ENCODE measurements at regions of chr10 and their contacts with region 1.

Region 1: DNA sequence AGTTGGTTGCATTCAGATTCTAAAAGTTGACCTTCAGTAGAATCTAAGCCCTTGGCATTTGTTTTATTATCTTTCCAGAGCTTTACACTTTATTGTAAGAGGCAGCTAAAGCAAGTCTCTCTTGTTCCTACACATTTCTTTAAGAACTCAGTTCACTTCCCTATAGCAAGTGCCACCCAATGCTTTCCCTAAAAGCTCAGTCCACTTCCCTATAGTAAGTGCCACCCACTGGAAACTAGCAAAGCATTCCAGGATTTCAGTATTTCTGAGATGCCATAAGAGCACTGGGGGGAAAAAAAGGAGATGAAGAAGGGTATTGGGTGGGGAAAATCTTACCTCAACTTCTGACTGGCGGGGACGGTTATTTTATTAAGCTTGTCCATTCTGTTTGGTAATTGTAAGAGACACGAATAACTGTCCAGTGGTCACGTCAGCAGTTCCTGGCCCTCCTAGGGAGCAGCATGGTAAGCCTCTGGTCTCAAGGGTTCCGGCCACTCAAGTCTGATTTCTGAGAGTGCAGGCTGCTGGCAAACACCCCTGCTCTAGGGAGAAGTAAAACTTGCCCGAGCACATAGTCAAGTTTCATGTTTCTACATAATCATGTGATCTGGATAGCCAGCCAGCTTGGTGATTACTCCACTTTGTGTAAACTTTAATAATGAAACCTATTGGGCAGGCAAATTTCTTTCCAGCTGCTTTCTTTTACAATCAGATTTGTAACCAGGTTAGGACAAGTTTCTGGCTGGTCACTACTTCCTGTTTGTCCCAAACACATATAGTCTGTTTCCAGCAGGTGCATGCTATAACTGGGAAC is at the start of gene BLNK:
- DNase-seq: peak; percentile 86
- H3K4me3 ChIP-seq: peak within 1 kb of the TSS; percentile 52 to 76 (median 54)
- H3K27ac ChIP-seq: peak within 1 kb of the TSS; percentile 47
- H3K4me1 ChIP-seq: peaks cover 51% of the 10 kb centered on the region
- H3K27me3 ChIP-seq: no peaks in the 10 kb centered on the region
- CTCF ChIP-seq: no peak
- total RNA-seq, gene BLNK: 5.8 to 9.8 TPM

Region 2: DNA sequence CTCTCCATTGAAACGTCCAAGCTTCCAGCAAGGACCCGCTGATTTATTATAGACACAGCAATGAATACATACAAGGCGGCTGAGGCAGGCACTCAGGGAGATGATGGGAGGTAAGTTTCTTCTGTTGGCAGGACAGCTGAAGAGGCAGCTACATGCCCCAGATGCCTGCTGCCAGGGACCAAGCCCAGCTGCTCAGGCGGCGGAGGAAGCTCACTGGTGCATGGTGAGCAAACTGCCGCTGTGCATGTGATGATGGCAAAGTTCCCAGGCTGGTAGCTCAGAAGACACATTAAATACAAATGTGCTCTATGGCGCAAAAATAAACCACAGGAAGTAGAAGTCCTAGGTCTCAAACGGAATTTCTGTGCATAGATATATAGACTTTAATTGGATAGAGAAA is 35.3 kb after region 1 on chr10:
- CTCF ChIA-PET with region 1: no interaction called
- dilution Hi-C with region 1: loop called (anchors 5 kb)
- in situ Hi-C with region 1: no loop called
- intact Hi-C with region 1: no loop called
- DNase-seq: no peak
- H3K4me3 ChIP-seq: no peak overlapping the region
- H3K27ac ChIP-seq: no peak overlapping the region
- H3K4me1 ChIP-seq: no peaks in the 10 kb centered on the region
- H3K27me3 ChIP-seq: no peaks in the 10 kb centered on the region
- CTCF ChIP-seq: no peak

Region 3: GRCh38 chr10:96642973-96643372 is 371.8 kb after region 1 on chr10:
- CTCF ChIA-PET with region 1: no interaction called
- dilution Hi-C with region 1: no loop called
- in situ Hi-C with region 1: no loop called
- intact Hi-C with region 1: no loop called
- DNase-seq: no peak
- H3K4me3 ChIP-seq: no peak overlapping the region
- H3K27ac ChIP-seq: no peak overlapping the region
- H3K4me1 ChIP-seq: no peaks in the 10 kb centered on the region
- H3K27me3 ChIP-seq: no peaks in the 10 kb centered on the region
- CTCF ChIP-seq: peak; percentile 39 to 53